B cell (primary cell): ENCODE measurements at regions of chr10 and their contacts with region 1.

Region 1: DNA sequence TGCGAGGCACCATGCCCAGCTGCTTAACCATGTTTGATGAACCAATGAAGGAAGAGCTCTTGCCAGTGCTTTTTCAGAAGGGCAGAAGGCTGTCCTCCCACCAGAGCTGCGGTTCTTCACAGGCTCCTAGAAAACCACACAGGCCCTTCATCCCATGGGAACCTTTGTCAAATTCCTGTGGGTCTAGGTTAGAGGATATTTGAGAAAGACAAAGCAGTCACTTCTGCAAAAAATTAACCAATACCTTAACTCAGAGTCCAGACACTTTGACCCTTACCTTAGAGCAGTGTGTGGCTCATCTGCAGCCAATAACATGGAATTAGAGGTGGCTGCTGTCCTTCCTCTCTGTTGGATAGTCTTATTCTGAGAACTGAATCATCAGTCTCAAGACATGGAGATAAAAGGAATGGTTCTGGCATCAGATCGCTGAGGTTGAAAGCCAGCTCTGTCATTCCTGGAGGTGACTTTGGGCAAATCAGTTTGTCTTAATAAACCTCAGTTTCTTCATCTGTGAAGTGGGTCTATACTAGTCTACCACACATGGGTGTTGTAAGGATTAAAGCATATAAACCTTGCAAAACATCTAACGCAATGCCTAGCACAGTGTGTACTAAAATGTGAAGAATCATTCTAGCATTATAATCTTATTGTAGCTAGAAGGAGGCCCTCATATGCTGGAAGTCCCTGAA is 65.1 kb upstream of the PIP4K2A start:
- DNase-seq: no peak
- ATAC-seq: no peak
- H3K4me3 ChIP-seq: no peak overlapping the region
- H3K4me3 Mint-ChIP-seq: no peak overlapping the region
- H3K27ac ChIP-seq: no peak overlapping the region
- H3K27ac Mint-ChIP-seq: no peak overlapping the region
- H3K4me1 ChIP-seq: no peaks in the 10 kb centered on the region
- H3K4me1 Mint-ChIP-seq: no peaks in the 10 kb centered on the region
- H3K27me3 ChIP-seq: no peaks in the 10 kb centered on the region
- H3K27me3 Mint-ChIP-seq: no peaks in the 10 kb centered on the region
- CTCF ChIP-seq: no peak

Region 2: GRCh38 chr10:22742678-22743077 is 36.8 kb before region 1 on chr10:
- CTCF ChIA-PET with region 1: no interaction called
- POLR2A ChIA-PET with region 1: no interaction called
- intact Hi-C with region 1: loop called (anchors 5 kb)
- DNase-seq: peak; percentile 79
- ATAC-seq: peak; percentile 100
- H3K4me3 ChIP-seq: no peak overlapping the region
- H3K4me3 Mint-ChIP-seq: peak overlapping the region; percentile 21
- H3K27ac ChIP-seq: peak overlapping the region; percentile 15 to 40
- H3K27ac Mint-ChIP-seq: peak overlapping the region; percentile 61
- H3K4me1 ChIP-seq: peaks cover 21 to 25% of the 10 kb centered on the region in 2 donors
- H3K4me1 Mint-ChIP-seq: peaks cover 21% of the 10 kb centered on the region
- H3K27me3 ChIP-seq: no peaks in the 10 kb centered on the region
- H3K27me3 Mint-ChIP-seq: no peaks in the 10 kb centered on the region
- CTCF ChIP-seq: no peak